Transverse colon (tissue), 4 donors: ENCODE measurements at regions of chr19 and their contacts with region 1.

Region 1: GRCh38 chr19:39341719-39342604 is at the start of gene SAMD4B:
- DNase-seq: peak; percentile 99
- H3K4me3 ChIP-seq: peak within 1 kb of the TSS; percentile 81 to 100 (median 92)
- H3K27ac ChIP-seq: peak within 1 kb of the TSS; percentile 83 to 93 (median 93)
- H3K4me1 ChIP-seq: peaks cover 19 to 44% (median 26%) of the 10 kb centered on the region in 4 donors
- H3K27me3 ChIP-seq: no peaks in the 10 kb centered on the region
- CTCF ChIP-seq: peak; percentile 66 to 84 (median 78)
- EP300 ChIP-seq: peak; percentile 6
- POLR2A ChIP-seq: peak; percentile 97
- total RNA-seq, gene SAMD4B: 60.7 to 102 (median 77.1) TPM

Region 2: DNA sequence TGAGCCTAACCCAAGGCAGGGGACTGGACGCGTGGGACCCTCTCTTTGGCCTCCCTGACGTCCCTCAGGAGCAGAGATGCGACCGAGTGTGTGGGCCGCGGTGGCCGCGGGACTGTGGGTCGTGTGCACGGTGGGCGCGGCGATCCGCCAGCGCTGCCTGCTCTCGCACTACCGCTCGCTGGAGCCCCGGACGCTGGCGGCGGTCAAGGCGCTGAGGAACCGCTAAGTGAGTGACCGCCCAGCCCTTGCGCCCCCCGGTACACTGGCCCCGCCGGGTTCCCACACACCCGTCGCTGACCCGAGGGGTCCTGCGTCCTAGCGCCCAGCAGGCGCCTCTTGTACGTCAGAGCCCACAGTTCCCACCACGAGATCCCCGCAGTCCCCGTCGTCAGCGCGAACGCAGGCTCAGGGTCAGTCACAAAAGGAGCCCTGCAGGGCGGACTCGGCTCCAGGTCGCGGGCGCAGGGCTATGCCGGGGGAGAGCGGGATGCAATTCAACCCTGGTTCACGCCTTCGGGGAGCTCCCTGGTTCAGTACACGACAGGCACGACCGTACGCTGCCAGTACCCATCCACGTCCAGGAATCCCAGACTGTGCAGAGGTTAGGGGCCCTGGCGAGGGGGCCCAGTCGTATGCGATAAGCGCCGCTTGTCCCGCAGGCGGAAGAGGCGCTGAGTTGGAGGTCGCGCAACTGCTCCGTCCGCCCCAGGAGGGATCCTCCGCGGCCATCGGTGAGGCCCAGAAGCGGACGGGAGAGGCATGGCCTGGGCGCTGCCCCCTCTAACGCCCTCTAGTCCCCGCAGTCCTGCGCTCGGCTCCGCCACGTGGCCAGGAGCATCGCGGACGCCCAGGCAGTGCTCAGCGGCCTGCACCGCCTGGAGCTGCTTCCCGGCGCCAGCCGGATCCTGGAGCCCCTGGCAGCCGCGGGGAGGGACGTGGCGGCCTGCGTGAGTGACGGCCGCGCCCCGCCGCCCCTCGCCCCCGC is 77.4 kb before region 1 on chr19:
- in situ Hi-C with region 1: no loop called
- intact Hi-C with region 1: no loop called
- DNase-seq: no peak
- H3K4me3 ChIP-seq: peak overlapping the region in 1 of 4 donors; percentile 6
- H3K27ac ChIP-seq: no peak overlapping the region
- H3K4me1 ChIP-seq: peaks cover 0 to 3% (median 0%) of the 10 kb centered on the region in 4 donors
- H3K27me3 ChIP-seq: peaks cover 69% of the 10 kb centered on the region
- CTCF ChIP-seq: no peak
- EP300 ChIP-seq: no peak
- POLR2A ChIP-seq: no peak

Region 3: DNA sequence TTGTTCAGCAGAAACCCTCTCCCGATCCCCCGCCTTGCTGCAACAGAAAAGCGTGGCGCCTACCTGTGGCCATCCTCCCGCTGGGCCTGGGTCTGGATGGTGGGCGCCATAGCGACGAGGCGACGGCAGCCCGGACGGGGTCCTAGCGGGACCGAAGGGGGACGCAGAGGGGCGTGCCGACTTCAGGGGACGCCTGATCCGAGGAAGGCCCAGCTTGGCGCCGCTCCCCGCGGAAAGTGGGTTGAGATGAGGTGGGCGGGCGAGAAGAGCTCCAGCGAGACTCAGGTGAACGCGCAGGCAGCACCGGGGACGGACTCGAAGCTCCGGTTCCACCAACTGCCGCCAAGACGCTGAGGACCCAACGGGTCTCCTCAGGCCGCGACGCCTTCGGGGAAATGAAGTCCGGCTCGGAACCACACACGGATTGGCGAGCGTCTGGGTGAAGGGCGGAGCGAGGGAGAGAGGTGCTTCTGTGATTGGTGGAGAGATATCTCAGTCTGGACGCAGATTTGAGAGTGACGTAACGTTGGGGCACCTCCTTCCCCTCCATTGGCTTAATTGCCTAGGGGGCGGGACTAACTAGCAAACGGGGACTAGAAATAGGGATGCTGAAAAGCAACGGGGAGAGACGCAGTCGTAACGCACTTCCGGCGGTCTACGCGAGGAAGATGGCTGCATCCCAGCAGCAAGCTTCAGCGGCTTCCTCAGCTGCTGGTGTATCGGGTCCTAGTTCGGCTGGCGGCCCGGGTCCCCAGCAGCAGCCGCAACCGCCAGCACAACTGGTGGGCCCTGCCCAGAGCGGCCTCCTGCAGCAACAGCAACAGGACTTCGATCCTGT is 49.0 kb after region 1 on chr19 and contains the starts of genes MED29 and PAF1:
- in situ Hi-C with region 1: loop called in 1 of 4 experiments (anchors 10 kb)
- intact Hi-C with region 1: no loop called
- DNase-seq: peak; percentile 97
- H3K4me3 ChIP-seq: peak within 1 kb of the TSS; percentile 71 to 100 (median 88)
- H3K27ac ChIP-seq: peak within 1 kb of the TSS; percentile 94 to 100 (median 98)
- H3K4me1 ChIP-seq: peaks cover 5 to 23% (median 20%) of the 10 kb centered on the region in 4 donors
- H3K27me3 ChIP-seq: no peaks in the 10 kb centered on the region
- CTCF ChIP-seq: peak in 2 of 5 experiments; percentile 26 to 46
- EP300 ChIP-seq: no peak
- POLR2A ChIP-seq: peak; percentile 95
- total RNA-seq, gene MED29: 22.8 to 37.4 (median 27.8) TPM
- total RNA-seq, gene PAF1: 37.8 to 71.2 (median 43.0) TPM